Adrenal gland (tissue), 19 donors: ENCODE measurements at regions of chr1 and their contacts with region 1.

Region 1: DNA sequence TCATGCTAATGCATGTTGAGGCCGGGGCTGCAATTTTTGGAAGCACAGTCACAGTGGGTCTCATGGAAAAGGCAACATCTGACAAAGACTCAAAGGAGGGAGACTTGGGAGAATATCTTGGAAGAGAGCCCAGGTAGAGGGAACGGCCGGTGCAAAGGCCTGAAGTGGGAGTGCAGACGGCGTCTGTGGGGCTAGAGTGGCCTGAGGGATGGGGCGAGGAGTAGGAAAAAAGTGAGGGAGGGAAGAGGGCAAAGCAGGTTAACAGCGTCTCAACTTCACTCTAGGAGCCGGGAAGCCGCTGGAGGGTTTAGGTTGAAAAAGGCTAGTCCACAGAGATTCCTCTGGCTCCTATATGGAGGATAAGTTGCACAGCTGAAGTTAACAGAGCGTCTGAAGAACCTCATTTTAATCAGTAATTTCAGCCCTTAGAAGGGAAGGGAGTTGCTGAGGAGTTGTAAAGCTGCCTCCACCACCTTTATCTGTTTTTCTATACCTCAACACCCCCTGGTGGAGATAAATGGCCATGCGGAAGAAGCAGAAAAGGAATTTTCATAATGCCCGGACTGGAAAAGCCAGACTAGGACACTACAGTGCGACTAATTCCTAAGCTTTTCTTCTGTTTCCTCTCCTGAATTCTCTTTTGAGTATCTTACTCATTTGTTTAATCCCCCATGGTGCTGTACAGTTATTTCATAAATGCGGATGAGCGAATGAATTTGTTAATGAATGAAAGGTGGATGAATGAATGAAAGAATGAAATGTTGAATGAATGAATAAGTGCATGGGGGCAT is 78.7 kb upstream of the ZNF281 start:
- DNase-seq: peak; percentile 56 to 83 (median 58)
- H3K4me3 ChIP-seq: no peak overlapping the region
- H3K27ac ChIP-seq: no peak overlapping the region
- H3K4me1 ChIP-seq: no peaks in the 10 kb centered on the region
- H3K27me3 ChIP-seq: peaks cover 4% of the 10 kb centered on the region
- CTCF ChIP-seq: peak; percentile 73 to 85 (median 84)
- POLR2A ChIP-seq: no peak

Region 2: GRCh38 chr1:199684686-199685273 is 803.8 kb before region 1 on chr1:
- intact Hi-C with region 1: loop called in 1 of 2 experiments (anchors 10 kb)
- DNase-seq: peak; percentile 13 to 54 (median 22)
- H3K4me3 ChIP-seq: no peak overlapping the region
- H3K27ac ChIP-seq: no peak overlapping the region
- H3K4me1 ChIP-seq: no peaks in the 10 kb centered on the region
- H3K27me3 ChIP-seq: no peaks in the 10 kb centered on the region
- CTCF ChIP-seq: peak; percentile 50 to 78 (median 68)
- POLR2A ChIP-seq: no peak

Region 3: DNA sequence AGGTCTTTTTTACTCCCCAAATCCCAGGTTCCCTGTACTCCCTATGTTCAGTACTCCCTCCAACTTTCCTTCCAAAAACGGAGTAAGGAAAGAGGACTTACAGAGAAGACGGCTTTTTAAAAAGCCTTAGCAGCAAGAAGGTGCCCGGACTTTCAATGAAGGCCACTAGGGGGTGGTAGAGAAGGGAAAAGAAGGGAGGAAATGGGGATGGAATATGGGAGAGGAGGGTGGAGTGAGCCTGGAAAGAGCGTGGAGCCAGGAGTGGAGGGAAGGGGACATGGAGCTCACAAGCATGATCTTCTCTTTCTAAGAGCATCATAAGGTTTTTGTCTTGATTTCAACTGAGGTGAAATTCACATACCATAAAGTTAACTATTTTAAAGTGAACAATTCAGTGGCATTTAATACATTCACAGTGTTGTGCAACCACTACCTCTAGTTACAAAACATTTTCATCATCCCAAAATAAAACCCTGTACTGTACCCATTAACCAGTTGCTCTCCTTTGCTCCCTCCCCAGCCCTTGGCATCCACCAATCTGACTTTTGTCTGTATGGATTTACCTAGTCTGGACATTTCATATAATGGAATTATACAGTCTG is 208.7 kb before region 1 on chr1:
- intact Hi-C with region 1: loop called (anchors 5 to 10 kb)
- DNase-seq: peak; percentile 25 to 70 (median 48)
- H3K4me3 ChIP-seq: no peak overlapping the region
- H3K27ac ChIP-seq: no peak overlapping the region
- H3K4me1 ChIP-seq: no peaks in the 10 kb centered on the region
- H3K27me3 ChIP-seq: no peaks in the 10 kb centered on the region
- CTCF ChIP-seq: peak; percentile 36 to 84 (median 65)
- POLR2A ChIP-seq: no peak